ENCODE measurements at regions of chr14 and their contacts with region 1.

Region 1: GRCh38 chr14:75132382-75133086 is 5.7 kb upstream of the NEK9 start:
- DNase-seq: no peak
- H3K4me3 ChIP-seq: no peak overlapping the region
- H3K27ac ChIP-seq: peak overlapping the region; percentile 9 to 57 (median 34)
- H3K4me1 ChIP-seq: peaks cover 0 to 16% (median 8%) of the 10 kb centered on the region in 4 donors
- H3K27me3 ChIP-seq: no peaks in the 10 kb centered on the region
- CTCF ChIP-seq: peak; percentile 69 to 87 (median 72)
- EP300 ChIP-seq: no peak
- POLR2A ChIP-seq: no peak

Region 2: GRCh38 chr14:74018586-74019407 is 1113.7 kb before region 1 on chr14 and contains the starts of genes BBOF1 and ENTPD5:
- intact Hi-C with region 1: no loop called
- DNase-seq: peak; percentile 92
- H3K4me3 ChIP-seq: peak within 1 kb of the TSS; percentile 83 to 98 (median 91)
- H3K27ac ChIP-seq: peak within 1 kb of the TSS; percentile 96 to 98 (median 98)
- H3K4me1 ChIP-seq: peaks cover 0 to 19% (median 15%) of the 10 kb centered on the region in 4 donors
- H3K27me3 ChIP-seq: no peaks in the 10 kb centered on the region
- CTCF ChIP-seq: no peak
- EP300 ChIP-seq: no peak
- POLR2A ChIP-seq: peak; percentile 57 to 64
- total RNA-seq, gene BBOF1: 8.9 to 13.6 (median 11.6) TPM
- total RNA-seq, gene ENTPD5: 8.0 to 11.1 (median 8.7) TPM

Region 3: GRCh38 chr14:75050852-75051554 is 81.5 kb before region 1 on chr14 and contains the start of gene MLH3:
- intact Hi-C with region 1: no loop called
- DNase-seq: peak; percentile 92
- H3K4me3 ChIP-seq: peak within 1 kb of the TSS; percentile 46 to 82 (median 62)
- H3K27ac ChIP-seq: peak within 1 kb of the TSS; percentile 87 to 93 (median 89)
- H3K4me1 ChIP-seq: peaks cover 0 to 30% (median 14%) of the 10 kb centered on the region in 4 donors
- H3K27me3 ChIP-seq: no peaks in the 10 kb centered on the region
- CTCF ChIP-seq: no peak
- EP300 ChIP-seq: no peak
- POLR2A ChIP-seq: peak in 1 of 2 donors; percentile 55
- total RNA-seq, gene MLH3: 30.0 to 42.9 (median 34.7) TPM

Region 4: DNA sequence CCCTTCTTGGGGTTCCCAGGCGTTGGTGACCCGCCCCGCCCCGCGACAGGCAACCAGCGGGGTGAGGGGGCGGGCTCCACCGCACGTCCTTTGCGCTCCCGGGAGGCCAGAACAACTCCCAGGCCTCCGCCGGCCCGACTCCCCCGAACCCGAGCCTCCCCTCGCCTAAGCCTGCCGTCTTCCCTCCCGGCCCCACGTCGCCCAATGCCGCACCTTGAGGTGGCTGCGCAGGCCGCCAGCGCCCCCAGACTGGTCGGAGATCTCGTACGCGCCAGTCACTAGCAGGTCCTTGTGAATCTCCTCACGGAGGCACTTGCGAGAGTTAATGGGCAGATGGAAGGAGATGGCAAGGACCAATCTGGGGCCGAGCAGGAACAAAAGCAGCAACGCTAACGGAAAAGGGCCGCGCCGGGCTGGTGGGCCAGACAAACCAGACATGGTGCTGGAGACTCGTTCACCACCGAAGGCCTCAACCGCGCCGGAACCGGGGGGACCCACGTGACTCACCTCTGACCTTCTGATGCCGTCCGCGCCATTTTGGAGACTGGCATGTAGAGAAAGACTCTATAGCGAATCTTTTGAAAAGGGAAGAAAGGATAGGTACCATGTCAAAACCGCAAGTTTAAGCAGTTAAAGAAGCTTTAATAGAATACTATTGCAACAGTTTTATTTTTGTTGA is 43.7 kb after region 1 on chr14 and contains the start of gene TMED10:
- intact Hi-C with region 1: loop called (anchors 5 kb)
- DNase-seq: peak; percentile 96
- H3K4me3 ChIP-seq: peak within 1 kb of the TSS; percentile 84 to 98 (median 90)
- H3K27ac ChIP-seq: peak within 1 kb of the TSS; percentile 97 to 99 (median 98)
- H3K4me1 ChIP-seq: peaks cover 0 to 33% (median 21%) of the 10 kb centered on the region in 4 donors
- H3K27me3 ChIP-seq: no peaks in the 10 kb centered on the region
- CTCF ChIP-seq: no peak
- EP300 ChIP-seq: peak in 1 of 4 donors; percentile 32
- POLR2A ChIP-seq: peak; percentile 66 to 67
- total RNA-seq, gene TMED10: 107 to 175 (median 165) TPM

Region 5: GRCh38 chr14:75487155-75487671 is 354.7 kb after region 1 on chr14:
- intact Hi-C with region 1: loop called (anchors 5 kb)
- DNase-seq: no peak
- H3K4me3 ChIP-seq: no peak overlapping the region
- H3K27ac ChIP-seq: no peak overlapping the region
- H3K4me1 ChIP-seq: no peaks in the 10 kb centered on the region
- H3K27me3 ChIP-seq: no peaks in the 10 kb centered on the region
- CTCF ChIP-seq: no peak
- EP300 ChIP-seq: no peak
- POLR2A ChIP-seq: no peak